SK-N-SH (cell line): ENCODE measurements at regions of chr17 and their contacts with region 1.

Region 1: DNA sequence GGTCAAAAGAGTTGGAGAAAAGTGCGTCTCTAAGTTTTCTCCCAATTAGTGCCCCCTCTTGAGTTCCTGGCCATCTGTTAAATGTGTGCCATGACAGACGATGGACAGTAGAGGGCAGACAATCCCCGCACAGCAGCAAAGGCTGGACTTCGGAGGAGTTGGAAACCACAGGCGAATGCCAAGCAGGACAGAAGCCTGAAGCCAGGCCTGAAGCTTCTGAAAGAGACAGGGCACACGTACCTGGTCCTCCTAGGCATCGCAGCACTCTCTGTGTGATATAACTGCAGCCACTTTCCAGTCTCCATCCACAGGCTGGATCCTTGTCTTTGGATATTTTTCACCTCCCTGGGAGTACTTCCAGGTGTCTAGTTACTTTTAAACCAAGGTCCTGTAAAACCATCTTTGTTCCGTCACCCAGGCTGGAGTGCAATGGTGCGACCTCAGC is 14.5 kb downstream of the C17orf100 start:
- DNase-seq: peak; percentile 78
- H3K4me3 ChIP-seq: peak overlapping the region in 1 of 2 experiments; percentile 18; a peak in 1 of 4 replicates
- H3K27ac ChIP-seq: no peak overlapping the region
- H3K4me1 ChIP-seq: no peaks in the 10 kb centered on the region
- H3K27me3 ChIP-seq: peaks cover 40% of the 10 kb centered on the region; the same call in 1 of the 2 replicates
- CTCF ChIP-seq: peak; percentile 92
- EP300 ChIP-seq: no peak
- RAD21 ChIP-seq: peak; percentile 89

Region 2: GRCh38 chr17:6648181-6648580 is 17.9 kb before region 1 on chr17:
- CTCF ChIA-PET with region 1: no interaction called
- POLR2A ChIA-PET with region 1: no interaction called
- DNase-seq: no peak
- H3K4me3 ChIP-seq: no peak overlapping the region
- H3K27ac ChIP-seq: no peak overlapping the region
- H3K4me1 ChIP-seq: peaks cover 8 to 11% of the 10 kb centered on the region in 2 experiments; a peak in 2 of 4 replicates
- H3K27me3 ChIP-seq: no peaks in the 10 kb centered on the region
- CTCF ChIP-seq: peak; percentile 38
- EP300 ChIP-seq: no peak
- RAD21 ChIP-seq: peak; percentile 26; the same call in 1 of the 2 replicates

Region 3: DNA sequence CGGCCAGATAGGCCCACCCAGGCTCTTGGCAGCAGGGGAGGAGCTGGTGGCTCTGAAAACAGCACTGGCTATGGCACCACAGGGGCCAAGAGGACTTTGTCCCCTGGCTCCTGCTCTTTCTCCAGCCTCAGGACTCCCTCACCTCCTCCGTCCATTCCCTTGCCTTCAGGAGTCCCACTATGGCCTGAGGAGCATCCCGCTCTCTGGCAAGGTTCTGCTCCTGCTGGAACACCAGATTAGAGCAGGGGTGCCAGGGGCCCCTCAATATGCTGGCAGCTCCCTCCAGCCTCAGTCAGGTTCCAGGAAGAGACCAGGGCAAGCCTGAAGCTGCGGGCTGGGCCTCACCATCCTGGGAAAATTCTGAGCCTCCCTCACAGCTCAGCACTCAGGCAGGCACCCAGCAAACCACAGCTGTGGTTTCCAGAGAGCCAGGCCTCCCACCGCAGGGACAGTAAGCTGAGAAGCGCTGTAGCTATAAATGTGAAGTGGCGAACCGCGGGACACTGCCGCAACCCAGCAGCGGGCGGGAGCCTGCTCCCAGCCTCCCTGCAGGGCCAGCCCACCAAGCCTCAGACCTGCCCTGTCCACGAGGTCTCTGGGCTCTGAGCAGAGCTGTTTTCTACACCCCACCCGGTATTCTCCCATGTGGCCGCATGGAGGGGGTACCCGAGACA is 11.2 kb after region 1 on chr17:
- CTCF ChIA-PET with region 1: interaction called, 12 read pairs
- POLR2A ChIA-PET with region 1: no interaction called
- DNase-seq: no peak
- H3K4me3 ChIP-seq: no peak overlapping the region
- H3K27ac ChIP-seq: no peak overlapping the region
- H3K4me1 ChIP-seq: no peaks in the 10 kb centered on the region
- H3K27me3 ChIP-seq: peaks cover 87% of the 10 kb centered on the region
- CTCF ChIP-seq: no peak
- EP300 ChIP-seq: no peak
- RAD21 ChIP-seq: no peak

Region 4: GRCh38 chr17:6843241-6843880 is 177.3 kb after region 1 on chr17:
- CTCF ChIA-PET with region 1: interaction called, 20 read pairs
- POLR2A ChIA-PET with region 1: no interaction called
- DNase-seq: peak; percentile 26
- H3K4me3 ChIP-seq: no peak overlapping the region
- H3K27ac ChIP-seq: no peak overlapping the region
- H3K4me1 ChIP-seq: no peaks in the 10 kb centered on the region
- H3K27me3 ChIP-seq: peaks cover 54% of the 10 kb centered on the region; the same call in 1 of the 2 replicates
- CTCF ChIP-seq: peak; percentile 74
- EP300 ChIP-seq: no peak
- RAD21 ChIP-seq: peak; percentile 39; the same call in 1 of the 2 replicates